ENCODE measurements at regions of chr13 and their contacts with region 1.

Region 1: GRCh38 chr13:77329133-77329910 is 2.4 kb upstream of the MYCBP2 start:
- DNase-seq: peak; percentile 79
- ATAC-seq: peak; percentile 65
- H3K4me3 Mint-ChIP-seq: peak overlapping the region; percentile 98
- H3K27ac Mint-ChIP-seq: peak overlapping the region; percentile 98
- H3K4me1 Mint-ChIP-seq: peaks cover 53% of the 10 kb centered on the region
- H3K27me3 Mint-ChIP-seq: no peaks in the 10 kb centered on the region
- CTCF ChIP-seq: no peak

Region 2: GRCh38 chr13:75902166-75903104 is 1426.9 kb before region 1 on chr13:
- CTCF ChIA-PET with region 1: no interaction called
- POLR2A ChIA-PET with region 1: no interaction called
- intact Hi-C with region 1: no loop called
- DNase-seq: no peak
- ATAC-seq: no peak
- H3K4me3 Mint-ChIP-seq: no peak overlapping the region
- H3K27ac Mint-ChIP-seq: no peak overlapping the region
- H3K4me1 Mint-ChIP-seq: no peaks in the 10 kb centered on the region
- H3K27me3 Mint-ChIP-seq: peaks cover 5% of the 10 kb centered on the region
- CTCF ChIP-seq: no peak

Region 3: GRCh38 chr13:77184455-77184854 is 144.9 kb before region 1 on chr13:
- CTCF ChIA-PET with region 1: no interaction called
- POLR2A ChIA-PET with region 1: interaction called, 7 read pairs
- intact Hi-C with region 1: loop called (anchors 1 kb)
- DNase-seq: peak; percentile 23
- ATAC-seq: peak; percentile 97
- H3K4me3 Mint-ChIP-seq: peak overlapping the region; percentile 61
- H3K27ac Mint-ChIP-seq: peak overlapping the region; percentile 95
- H3K4me1 Mint-ChIP-seq: peaks cover 28% of the 10 kb centered on the region
- H3K27me3 Mint-ChIP-seq: no peaks in the 10 kb centered on the region
- CTCF ChIP-seq: no peak

Region 4: GRCh38 chr13:77291774-77292173 is 37.5 kb before region 1 on chr13:
- CTCF ChIA-PET with region 1: interaction called, 7 read pairs
- POLR2A ChIA-PET with region 1: interaction called, 43 read pairs
- intact Hi-C with region 1: loop called (anchors 1 kb)
- DNase-seq: no peak
- ATAC-seq: no peak
- H3K4me3 Mint-ChIP-seq: no peak overlapping the region
- H3K27ac Mint-ChIP-seq: peak overlapping the region; percentile 76
- H3K4me1 Mint-ChIP-seq: peaks cover 47% of the 10 kb centered on the region
- H3K27me3 Mint-ChIP-seq: no peaks in the 10 kb centered on the region
- CTCF ChIP-seq: no peak

Region 5: GRCh38 chr13:77313923-77314322 is 15.4 kb before region 1 on chr13:
- CTCF ChIA-PET with region 1: interaction called, 3 read pairs
- POLR2A ChIA-PET with region 1: interaction called, 9 read pairs
- intact Hi-C with region 1: loop called (anchors 1 kb)
- DNase-seq: no peak
- ATAC-seq: no peak
- H3K4me3 Mint-ChIP-seq: no peak overlapping the region
- H3K27ac Mint-ChIP-seq: peak overlapping the region; percentile 42
- H3K4me1 Mint-ChIP-seq: peaks cover 89% of the 10 kb centered on the region
- H3K27me3 Mint-ChIP-seq: no peaks in the 10 kb centered on the region
- CTCF ChIP-seq: no peak

Region 6: GRCh38 chr13:77353995-77354394 is 24.7 kb after region 1 on chr13:
- CTCF ChIA-PET with region 1: interaction called, 3 read pairs
- POLR2A ChIA-PET with region 1: interaction called, 11 read pairs
- intact Hi-C with region 1: loop called (anchors 2 kb)
- DNase-seq: no peak
- ATAC-seq: peak; percentile 86
- H3K4me3 Mint-ChIP-seq: peak overlapping the region; percentile 36
- H3K27ac Mint-ChIP-seq: peak overlapping the region; percentile 88
- H3K4me1 Mint-ChIP-seq: peaks cover 36% of the 10 kb centered on the region
- H3K27me3 Mint-ChIP-seq: no peaks in the 10 kb centered on the region
- CTCF ChIP-seq: no peak

Region 7: DNA sequence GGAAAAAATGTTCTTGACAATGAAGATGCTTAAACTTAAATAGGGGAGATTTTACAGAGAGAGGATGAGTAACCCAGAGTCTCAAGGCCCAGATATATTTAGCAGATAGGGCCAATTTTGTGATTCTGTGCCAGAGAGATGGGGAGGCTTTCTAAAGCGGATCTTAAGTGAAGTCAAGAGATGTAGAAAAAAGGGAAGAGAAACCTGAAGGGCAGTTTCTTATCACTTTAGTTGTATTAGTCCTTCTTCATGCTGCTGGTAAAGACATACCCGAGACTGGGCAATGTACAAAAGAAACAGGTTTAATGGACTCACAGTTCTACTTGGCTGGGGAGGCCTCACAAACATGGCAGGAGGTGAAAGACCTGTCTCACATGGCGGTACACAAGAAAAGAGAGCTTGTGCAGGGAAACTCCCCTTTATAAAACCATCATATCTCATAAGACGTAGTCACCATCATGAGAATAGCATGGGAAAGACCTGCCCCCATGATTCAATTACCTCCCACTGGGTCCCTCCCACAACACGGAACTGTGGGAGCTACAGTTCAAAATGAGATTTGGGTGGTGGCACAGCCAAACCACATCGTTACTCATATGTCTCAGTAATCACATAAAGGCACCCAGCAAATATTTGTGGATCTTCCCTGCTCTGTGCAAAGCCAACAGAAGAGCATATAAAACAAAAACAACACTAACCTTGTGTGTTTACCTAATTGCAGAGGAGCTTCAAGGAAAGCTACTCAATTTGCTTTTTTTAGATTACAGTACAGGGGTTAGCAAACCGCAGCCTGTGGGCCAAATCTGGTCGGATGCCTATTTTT is 100.2 kb after region 1 on chr13:
- CTCF ChIA-PET with region 1: interaction called, 3 read pairs
- POLR2A ChIA-PET with region 1: interaction called, 42 read pairs
- intact Hi-C with region 1: loop called (anchors 1 kb)
- DNase-seq: peak; percentile 22
- ATAC-seq: peak; percentile 91
- H3K4me3 Mint-ChIP-seq: peak overlapping the region; percentile 75
- H3K27ac Mint-ChIP-seq: peak overlapping the region; percentile 99
- H3K4me1 Mint-ChIP-seq: peaks cover 44% of the 10 kb centered on the region
- H3K27me3 Mint-ChIP-seq: no peaks in the 10 kb centered on the region
- CTCF ChIP-seq: no peak

Region 8: GRCh38 chr13:77620138-77620537 is 290.8 kb after region 1 on chr13:
- CTCF ChIA-PET with region 1: no interaction called
- POLR2A ChIA-PET with region 1: no interaction called
- intact Hi-C with region 1: no loop called
- DNase-seq: no peak
- ATAC-seq: no peak
- H3K4me3 Mint-ChIP-seq: no peak overlapping the region
- H3K27ac Mint-ChIP-seq: no peak overlapping the region
- H3K4me1 Mint-ChIP-seq: no peaks in the 10 kb centered on the region
- H3K27me3 Mint-ChIP-seq: peaks cover 16% of the 10 kb centered on the region
- CTCF ChIP-seq: no peak